Aorta (tissue), 5 donors: ENCODE measurements at regions of chr10 and their contacts with region 1.

Region 1: GRCh38 chr10:24360282-24361127 is 151.6 kb downstream of the KIAA1217 start:
- DNase-seq: peak; percentile 61 to 87
- ATAC-seq: peak; percentile 69
- H3K4me3 ChIP-seq: no peak overlapping the region
- H3K27ac ChIP-seq: no peak overlapping the region
- H3K4me1 ChIP-seq: no peaks in the 10 kb centered on the region
- H3K27me3 ChIP-seq: no peaks in the 10 kb centered on the region

Region 2: DNA sequence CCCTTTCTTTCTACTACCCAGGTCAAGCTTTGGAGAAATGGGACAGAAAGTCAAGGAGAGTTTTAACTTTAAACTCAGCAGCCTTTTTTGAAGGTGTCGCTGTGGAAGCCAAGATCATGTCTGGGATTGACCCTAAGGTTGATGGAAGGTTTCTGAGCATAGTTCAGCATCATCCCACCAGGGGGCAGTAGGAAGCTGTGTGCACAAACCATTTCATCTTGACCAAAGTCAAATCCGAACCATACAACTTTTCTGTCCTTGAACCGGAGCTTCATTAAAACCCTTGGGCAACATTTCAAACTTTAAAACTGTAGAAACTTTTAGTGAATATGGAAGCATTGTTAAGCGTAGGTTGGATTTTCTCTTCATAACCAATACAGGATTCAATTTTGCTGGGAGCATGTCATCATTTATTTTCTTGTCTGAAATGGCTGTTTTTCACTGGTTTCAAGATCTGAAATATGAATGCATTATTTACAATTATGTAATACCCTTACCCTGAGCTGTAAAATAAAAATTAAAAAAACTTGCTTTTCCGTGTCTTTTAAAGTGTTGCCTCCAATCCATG is 365.9 kb before region 1 on chr10:
- intact Hi-C with region 1: loop called (anchors 2 to 5 kb)
- DNase-seq: peak in 1 of 2 donors; percentile 45
- ATAC-seq: peak; percentile 78
- H3K4me3 ChIP-seq: no peak overlapping the region
- H3K27ac ChIP-seq: no peak overlapping the region
- H3K4me1 ChIP-seq: no peaks in the 10 kb centered on the region
- H3K27me3 ChIP-seq: no peaks in the 10 kb centered on the region

Region 3: DNA sequence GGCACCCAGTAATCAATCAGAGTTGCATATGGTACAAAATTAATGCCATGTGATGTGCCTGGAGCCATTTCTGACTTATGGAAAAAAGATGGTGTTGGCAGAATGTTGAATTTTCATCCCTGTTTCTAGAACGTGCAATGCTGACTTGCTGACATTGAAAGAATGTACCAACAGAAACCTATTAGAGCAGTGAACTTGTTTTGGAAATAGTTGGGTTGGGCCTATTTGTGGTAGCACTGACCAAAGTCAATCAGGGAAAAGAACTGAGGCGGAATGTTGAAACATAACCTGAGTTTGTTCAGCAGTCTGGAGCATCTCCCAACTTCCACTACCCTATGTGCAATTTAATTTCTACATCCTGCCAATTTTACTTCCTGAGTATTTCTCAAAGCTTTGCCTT is 163.2 kb before region 1 on chr10:
- intact Hi-C with region 1: loop called in 1 of 2 experiments (anchors 5 kb)
- DNase-seq: no peak
- ATAC-seq: no peak
- H3K4me3 ChIP-seq: no peak overlapping the region
- H3K27ac ChIP-seq: no peak overlapping the region
- H3K4me1 ChIP-seq: no peaks in the 10 kb centered on the region
- H3K27me3 ChIP-seq: no peaks in the 10 kb centered on the region

Region 4: DNA sequence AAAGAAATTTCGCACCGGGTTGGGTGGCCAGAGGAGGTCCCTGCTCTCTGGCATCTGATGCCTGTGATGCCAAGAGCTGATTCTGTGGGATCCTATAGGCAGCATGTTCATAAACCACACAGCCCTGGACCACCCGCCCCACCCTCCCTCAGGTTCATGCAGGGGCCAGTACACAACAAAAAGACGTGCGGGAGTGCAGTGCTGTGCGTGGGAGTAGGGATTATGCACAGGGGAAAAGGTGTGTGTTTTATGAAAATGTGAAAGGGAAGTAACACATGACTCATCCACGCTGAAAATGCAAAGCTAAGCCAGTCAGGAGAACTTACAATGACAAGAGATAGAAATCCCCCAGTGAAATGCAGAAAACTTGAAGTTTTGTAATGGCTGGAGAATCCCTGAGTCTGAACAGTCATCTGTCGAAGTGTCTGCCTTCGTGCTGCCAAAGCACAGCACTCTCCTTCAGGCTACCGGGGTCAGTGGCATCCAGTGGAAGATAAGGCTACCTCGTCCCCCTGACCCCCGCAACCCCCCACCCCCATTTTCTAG is 150.5 kb before region 1 on chr10:
- intact Hi-C with region 1: loop called in 1 of 2 experiments (anchors 5 kb)
- DNase-seq: no peak
- ATAC-seq: peak; percentile 44
- H3K4me3 ChIP-seq: peak overlapping the region; percentile 81 to 93
- H3K27ac ChIP-seq: no peak overlapping the region
- H3K4me1 ChIP-seq: peaks cover 0 to 8% of the 10 kb centered on the region in 2 donors
- H3K27me3 ChIP-seq: no peaks in the 10 kb centered on the region

Region 5: GRCh38 chr10:24503461-24504320 is 143.2 kb after region 1 on chr10:
- intact Hi-C with region 1: loop called in 1 of 2 experiments (anchors 10 kb)
- DNase-seq: no peak
- ATAC-seq: no peak
- H3K4me3 ChIP-seq: no peak overlapping the region
- H3K27ac ChIP-seq: no peak overlapping the region
- H3K4me1 ChIP-seq: no peaks in the 10 kb centered on the region
- H3K27me3 ChIP-seq: no peaks in the 10 kb centered on the region

Region 6: GRCh38 chr10:24518981-24519597 is 158.6 kb after region 1 on chr10:
- intact Hi-C with region 1: loop called in 1 of 2 experiments (anchors 10 kb)
- DNase-seq: peak in 1 of 2 donors; percentile 53
- ATAC-seq: peak; percentile 76
- H3K4me3 ChIP-seq: no peak overlapping the region
- H3K27ac ChIP-seq: no peak overlapping the region
- H3K4me1 ChIP-seq: peaks cover 0 to 3% of the 10 kb centered on the region in 2 donors
- H3K27me3 ChIP-seq: no peaks in the 10 kb centered on the region